ENCODE measurements at regions of chr3 and their contacts with region 1.

Region 1: DNA sequence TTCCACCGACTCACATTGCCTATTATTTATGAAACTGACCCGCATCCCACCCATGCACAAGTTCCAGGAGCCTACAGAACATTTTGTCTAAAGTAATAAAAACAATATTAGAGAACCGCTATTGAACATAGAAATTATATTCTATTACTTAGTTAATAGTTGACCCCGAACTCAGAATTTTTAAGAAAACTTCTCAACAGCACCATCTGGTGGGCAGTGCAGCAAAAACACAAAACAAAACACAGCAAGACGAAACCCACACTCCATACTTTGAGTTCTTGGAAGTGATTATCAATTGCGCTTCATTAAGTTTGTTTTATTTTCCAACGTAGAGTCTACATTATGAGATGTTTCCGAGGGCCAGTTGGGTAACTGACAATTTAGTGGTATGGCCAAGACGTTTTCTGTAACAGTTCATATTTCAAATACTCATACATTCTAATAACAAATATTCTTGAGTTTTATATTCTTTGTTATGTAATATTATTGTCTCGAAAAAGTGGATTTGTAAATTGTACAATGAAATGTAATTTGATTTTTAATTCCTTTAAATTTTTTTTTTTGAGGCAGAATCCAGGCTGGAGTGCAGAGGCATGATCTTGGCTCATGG is 24.0 kb upstream of the C3orf70 start:
- DNase-seq: peak; percentile 45 to 70 (median 57)
- H3K4me3 ChIP-seq: no peak overlapping the region
- H3K27ac ChIP-seq: no peak overlapping the region
- H3K4me1 ChIP-seq: peaks cover 3 to 9% (median 7%) of the 10 kb centered on the region in 4 experiments
- H3K27me3 ChIP-seq: peaks cover 0 to 2% (median 0%) of the 10 kb centered on the region in 5 experiments

Region 2: DNA sequence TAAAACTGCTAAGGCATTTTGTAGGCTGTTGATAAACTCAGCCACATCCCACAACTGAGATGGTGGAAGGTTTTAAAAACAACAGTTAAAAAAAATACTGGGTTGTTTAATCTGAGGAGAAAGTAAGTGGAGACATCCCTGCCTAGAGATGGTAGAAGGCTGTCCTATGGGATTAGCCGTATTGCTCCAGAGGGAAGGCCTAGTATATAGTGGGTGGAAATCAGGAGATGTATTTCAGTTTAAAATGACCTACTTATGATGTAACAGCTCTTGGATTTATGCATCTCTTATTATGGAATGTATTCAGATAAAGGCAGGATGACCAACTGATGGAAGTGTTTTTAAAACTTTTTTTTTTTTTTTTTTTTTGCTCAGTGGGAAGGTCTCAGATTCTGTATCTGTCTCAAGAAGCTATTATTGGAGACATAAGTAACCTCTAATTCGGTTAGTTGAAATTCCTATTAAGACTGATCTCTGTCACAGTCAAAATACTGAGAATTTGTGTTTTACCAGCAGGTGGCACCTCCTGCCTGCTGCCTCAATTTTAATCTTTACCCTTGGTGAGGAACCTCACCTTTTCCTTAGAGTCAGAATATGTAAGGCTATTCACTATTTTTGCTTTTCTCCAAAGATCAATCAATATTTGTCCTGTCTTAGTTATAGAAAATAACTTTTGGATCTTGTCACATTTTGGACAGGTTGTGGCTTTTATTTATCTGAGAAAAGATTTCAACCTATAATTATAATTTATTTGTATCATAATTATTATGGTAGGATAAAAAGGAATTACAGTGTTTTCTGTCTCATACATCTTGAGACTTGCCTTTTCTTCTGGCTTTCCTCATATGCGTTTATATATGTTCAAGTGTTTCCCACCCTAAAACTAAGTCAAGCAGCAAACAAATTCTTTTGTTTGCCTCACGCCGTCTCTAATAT is 301.9 kb before region 1 on chr3:
- CTCF ChIA-PET with region 1: interaction called, 12 read pairs
- POLR2A ChIA-PET with region 1: no interaction called
- DNase-seq: peak; percentile 31 to 68 (median 58)
- H3K4me3 ChIP-seq: no peak overlapping the region
- H3K27ac ChIP-seq: no peak overlapping the region
- H3K4me1 ChIP-seq: no peaks in the 10 kb centered on the region
- H3K27me3 ChIP-seq: no peaks in the 10 kb centered on the region

Region 3: GRCh38 chr3:185164428-185165217 is 12.2 kb before region 1 on chr3:
- CTCF ChIA-PET with region 1: interaction called, 14 read pairs
- POLR2A ChIA-PET with region 1: no interaction called
- DNase-seq: no peak
- H3K4me3 ChIP-seq: no peak overlapping the region
- H3K27ac ChIP-seq: no peak overlapping the region
- H3K4me1 ChIP-seq: no peaks in the 10 kb centered on the region
- H3K27me3 ChIP-seq: peaks cover 0 to 3% (median 0%) of the 10 kb centered on the region in 5 experiments

Region 4: DNA sequence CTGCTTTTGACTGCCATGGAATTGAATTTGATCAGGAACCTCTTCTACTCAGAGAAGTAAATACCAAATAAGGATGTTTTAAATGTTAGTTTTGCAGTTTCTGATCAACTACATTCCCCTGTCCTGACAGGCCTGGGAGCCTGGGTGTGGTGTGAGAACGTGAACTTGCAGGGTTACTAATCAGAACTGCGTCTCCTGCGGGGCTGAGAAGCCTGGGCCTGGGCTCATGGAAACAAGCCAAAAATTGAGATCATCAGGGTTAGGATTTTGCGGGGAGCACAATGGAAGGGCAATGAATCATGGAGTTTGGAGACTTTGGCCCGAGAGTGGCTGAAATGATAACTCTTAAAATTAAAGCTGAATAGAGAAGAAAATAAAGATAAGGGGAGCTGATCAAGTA is 23.8 kb after region 1 on chr3:
- CTCF ChIA-PET with region 1: no interaction called
- POLR2A ChIA-PET with region 1: no interaction called
- DNase-seq: no peak
- H3K4me3 ChIP-seq: no peak overlapping the region
- H3K27ac ChIP-seq: no peak overlapping the region
- H3K4me1 ChIP-seq: no peaks in the 10 kb centered on the region
- H3K27me3 ChIP-seq: no peaks in the 10 kb centered on the region

Region 5: GRCh38 chr3:185242605-185243004 is 65.8 kb after region 1 on chr3:
- CTCF ChIA-PET with region 1: no interaction called
- POLR2A ChIA-PET with region 1: no interaction called
- DNase-seq: no peak
- H3K4me3 ChIP-seq: no peak overlapping the region
- H3K27ac ChIP-seq: no peak overlapping the region
- H3K4me1 ChIP-seq: no peaks in the 10 kb centered on the region
- H3K27me3 ChIP-seq: no peaks in the 10 kb centered on the region

Region 6: DNA sequence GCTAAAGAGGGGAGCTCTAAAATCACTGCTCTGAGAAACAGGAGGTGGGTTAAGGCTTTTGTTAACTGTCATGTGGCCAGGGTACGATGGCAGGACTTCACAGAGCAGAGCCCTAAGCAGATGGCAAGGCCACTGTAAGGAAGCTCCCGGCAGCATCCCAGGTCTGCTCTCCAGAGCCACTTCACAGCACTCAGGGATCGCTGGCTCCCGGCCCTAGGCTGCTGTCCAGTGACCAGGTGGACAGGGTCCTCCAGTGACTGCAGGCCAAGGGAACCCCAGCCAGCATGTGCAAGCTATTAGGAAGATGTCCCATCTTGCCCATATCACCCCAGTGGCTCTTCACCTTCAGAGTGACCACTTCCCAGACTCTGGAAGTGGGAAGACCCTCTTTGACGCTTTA is 311.6 kb after region 1 on chr3:
- CTCF ChIA-PET with region 1: no interaction called
- POLR2A ChIA-PET with region 1: no interaction called
- DNase-seq: no peak
- H3K4me3 ChIP-seq: no peak overlapping the region
- H3K27ac ChIP-seq: no peak overlapping the region
- H3K4me1 ChIP-seq: no peaks in the 10 kb centered on the region
- H3K27me3 ChIP-seq: no peaks in the 10 kb centered on the region

Measured in common myeloid progenitor, CD34-positive (primary cell).